PC-3 (cell line): ENCODE measurements at regions of chr5 and their contacts with region 1.

Region 1: DNA sequence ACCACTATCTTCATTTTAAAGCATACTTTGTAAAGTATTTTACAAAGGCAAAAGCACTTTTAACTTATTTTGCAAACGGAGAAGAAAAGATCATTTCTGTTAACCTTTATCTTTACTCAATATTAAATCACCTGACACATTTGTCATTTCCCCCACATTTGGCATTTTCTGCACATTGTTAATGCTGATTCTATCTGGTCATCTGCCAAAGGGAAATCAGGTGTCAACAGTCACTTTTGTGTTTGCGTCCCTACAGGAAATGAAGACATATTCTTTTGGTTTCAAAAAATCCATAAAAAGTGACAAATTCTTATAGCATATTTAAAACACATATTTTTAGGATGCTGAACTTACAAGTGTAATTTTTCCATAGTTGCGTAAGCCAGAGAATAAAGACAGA is 191.3 kb upstream of the TMEM161B start:
- DNase-seq: peak; percentile 41
- ATAC-seq: peak; percentile 32
- H3K4me3 ChIP-seq: no peak overlapping the region
- H3K27ac ChIP-seq: peak overlapping the region; percentile 42
- H3K4me1 ChIP-seq: peaks cover 21% of the 10 kb centered on the region
- H3K27me3 ChIP-seq: no peaks in the 10 kb centered on the region
- CTCF ChIP-seq: no peak

Region 2: DNA sequence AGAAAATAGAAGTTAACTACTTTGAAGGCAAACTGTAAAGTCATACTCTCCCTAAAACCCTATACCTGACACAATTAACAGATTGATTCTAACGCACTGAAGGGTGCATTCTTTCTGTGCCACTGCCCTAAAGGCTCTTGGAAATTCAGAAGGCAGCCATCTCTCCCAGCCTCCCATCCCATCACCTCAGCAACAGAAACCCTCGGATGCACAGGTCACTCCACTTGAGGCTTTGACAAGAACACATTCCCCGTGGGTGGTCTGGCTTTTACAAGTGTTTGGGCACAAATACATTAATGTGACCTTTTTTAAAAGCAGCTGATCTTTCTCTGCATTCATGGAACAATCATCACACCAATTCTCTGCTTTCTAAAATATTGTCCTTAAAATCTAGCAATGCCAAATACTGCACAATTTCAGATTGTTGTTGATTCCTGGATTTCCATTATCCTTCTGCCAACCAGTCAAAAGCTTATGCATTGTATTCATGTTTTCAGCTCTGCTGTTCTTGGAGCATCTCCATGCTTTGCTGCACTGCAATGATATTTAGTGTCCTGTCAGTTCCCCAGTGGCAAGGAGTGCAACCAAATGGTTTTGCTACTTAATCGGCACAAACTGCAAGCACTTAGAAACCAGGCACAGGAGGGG is 366.9 kb before region 1 on chr5:
- CTCF ChIA-PET with region 1: no interaction called
- POLR2A ChIA-PET with region 1: no interaction called
- intact Hi-C with region 1: no loop called
- DNase-seq: no peak
- ATAC-seq: no peak
- H3K4me3 ChIP-seq: no peak overlapping the region
- H3K27ac ChIP-seq: no peak overlapping the region
- H3K4me1 ChIP-seq: no peaks in the 10 kb centered on the region
- H3K27me3 ChIP-seq: no peaks in the 10 kb centered on the region
- CTCF ChIP-seq: no peak

Region 3: GRCh38 chr5:88515876-88516819 is 56.2 kb after region 1 on chr5:
- CTCF ChIA-PET with region 1: no interaction called
- POLR2A ChIA-PET with region 1: no interaction called
- intact Hi-C with region 1: loop called (anchors 2 kb)
- DNase-seq: peak; percentile 86
- ATAC-seq: peak; percentile 96
- H3K4me3 ChIP-seq: no peak overlapping the region
- H3K27ac ChIP-seq: peak overlapping the region; percentile 47
- H3K4me1 ChIP-seq: peaks cover 18% of the 10 kb centered on the region
- H3K27me3 ChIP-seq: no peaks in the 10 kb centered on the region
- CTCF ChIP-seq: no peak

Region 4: GRCh38 chr5:89428624-89429023 is 968.7 kb after region 1 on chr5:
- CTCF ChIA-PET with region 1: no interaction called
- POLR2A ChIA-PET with region 1: no interaction called
- intact Hi-C with region 1: no loop called
- DNase-seq: no peak
- ATAC-seq: no peak
- H3K4me3 ChIP-seq: no peak overlapping the region
- H3K27ac ChIP-seq: no peak overlapping the region
- H3K4me1 ChIP-seq: no peaks in the 10 kb centered on the region
- H3K27me3 ChIP-seq: no peaks in the 10 kb centered on the region
- CTCF ChIP-seq: no peak